Ascending aorta (tissue), 2 donors: ENCODE measurements at regions of chr17 and their contacts with region 1.

Region 1: GRCh38 chr17:75289115-75289831 is at the start of gene SLC25A19:
- DNase-seq: peak; percentile 94 to 99
- H3K4me3 ChIP-seq: peak within 1 kb of the TSS; percentile 69 to 80
- H3K27ac ChIP-seq: peak within 1 kb of the TSS; percentile 86 to 90
- H3K4me1 ChIP-seq: no peaks in the 10 kb centered on the region
- H3K27me3 ChIP-seq: no peaks in the 10 kb centered on the region
- CTCF ChIP-seq: peak in 1 of 3 experiments; percentile 9
- total RNA-seq, gene SLC25A19: 1.3 TPM

Region 2: DNA sequence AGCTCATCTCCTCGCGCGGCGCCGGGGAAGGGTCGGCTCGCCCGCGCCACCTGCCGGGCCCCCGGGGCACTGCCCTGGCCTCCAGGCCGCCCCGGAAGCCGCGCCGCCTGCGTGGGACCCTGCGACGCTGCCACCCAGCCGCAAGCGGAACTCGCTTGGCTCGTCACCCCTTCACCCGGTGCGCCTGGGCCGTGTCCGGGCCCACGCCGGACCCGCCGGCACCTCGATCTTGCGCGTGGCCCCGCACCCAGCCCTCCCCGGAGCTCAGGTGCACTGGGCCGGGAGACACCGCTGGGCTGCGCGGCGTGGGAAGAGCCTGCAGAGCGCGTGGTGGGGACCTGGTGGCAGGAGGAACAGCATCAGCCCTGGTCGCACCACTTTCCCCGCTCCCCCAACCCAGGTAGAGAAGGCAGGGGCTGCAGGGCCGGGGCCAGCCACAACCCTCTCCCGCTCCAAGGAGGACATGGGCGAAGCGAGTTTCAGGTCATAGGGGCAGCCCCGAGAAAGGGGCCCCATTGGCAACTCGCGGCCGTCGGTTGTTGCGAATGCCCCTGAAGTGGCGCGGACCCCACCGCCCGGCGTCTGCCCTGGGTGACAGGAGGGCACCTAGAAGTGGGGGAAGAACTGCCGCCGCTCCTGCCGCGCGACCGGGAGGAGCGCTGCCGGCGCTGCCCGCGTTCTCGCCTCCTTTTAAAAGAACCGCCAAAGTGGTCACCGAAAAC is 17.9 kb before region 1 on chr17:
- intact Hi-C with region 1: loop called (anchors 1 kb)
- DNase-seq: peak in 1 of 2 donors; percentile 88
- H3K4me3 ChIP-seq: peak overlapping the region; percentile 75 to 95
- H3K27ac ChIP-seq: peak overlapping the region; percentile 89 to 99
- H3K4me1 ChIP-seq: peaks cover 15 to 22% of the 10 kb centered on the region in 2 donors
- H3K27me3 ChIP-seq: no peaks in the 10 kb centered on the region
- CTCF ChIP-seq: peak; percentile 14 to 98 (median 52)

Region 3: DNA sequence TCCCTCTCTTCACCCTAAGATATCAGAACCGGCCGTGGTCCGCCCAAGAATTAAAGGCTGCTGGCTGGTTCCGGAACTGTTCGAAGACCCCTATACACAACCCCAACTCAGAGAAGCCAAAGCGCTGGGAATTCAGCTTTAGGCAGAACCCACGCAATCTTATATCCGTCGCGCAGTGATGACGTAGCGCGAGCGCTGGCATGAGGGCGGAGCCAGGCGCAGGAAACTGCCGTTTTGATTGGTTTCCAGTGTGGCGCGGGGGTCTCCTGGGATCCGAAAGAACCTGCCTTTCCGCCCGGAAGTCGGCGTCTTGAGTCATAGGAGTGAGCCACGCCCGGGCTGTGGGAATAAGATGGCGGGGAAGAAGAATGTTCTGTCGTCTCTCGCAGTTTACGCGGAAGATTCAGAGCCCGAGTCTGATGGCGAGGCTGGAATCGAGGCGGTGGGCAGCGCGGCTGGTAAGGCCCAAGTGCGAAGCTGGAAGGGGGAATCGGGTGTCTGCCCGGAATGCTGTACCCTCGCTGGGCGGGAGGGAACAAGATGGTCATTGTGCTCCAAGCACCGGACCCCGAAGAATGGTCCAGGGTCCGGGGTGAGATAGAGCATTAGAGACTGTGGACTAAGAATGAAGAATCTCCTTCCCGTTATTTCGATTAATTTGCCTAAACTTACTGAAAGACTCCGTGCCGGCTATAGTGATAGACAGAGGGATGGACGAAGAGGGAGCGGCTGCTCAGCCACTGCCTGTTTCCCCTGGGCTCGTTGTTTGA is 377.9 kb after region 1 on chr17 and contains the starts of genes RECQL5 and SAP30BP:
- intact Hi-C with region 1: loop called (anchors 1 kb)
- DNase-seq: peak; percentile 88 to 99
- H3K4me3 ChIP-seq: peak within 1 kb of the TSS; percentile 81 to 82
- H3K27ac ChIP-seq: peak within 1 kb of the TSS; percentile 80 to 96
- H3K4me1 ChIP-seq: peaks cover 10 to 16% of the 10 kb centered on the region in 2 donors
- H3K27me3 ChIP-seq: no peaks in the 10 kb centered on the region
- CTCF ChIP-seq: no peak
- total RNA-seq, gene RECQL5: 7.6 TPM
- total RNA-seq, gene SAP30BP: 70.9 TPM